ENCODE measurements at regions of chr1 and their contacts with region 1.

Region 1: DNA sequence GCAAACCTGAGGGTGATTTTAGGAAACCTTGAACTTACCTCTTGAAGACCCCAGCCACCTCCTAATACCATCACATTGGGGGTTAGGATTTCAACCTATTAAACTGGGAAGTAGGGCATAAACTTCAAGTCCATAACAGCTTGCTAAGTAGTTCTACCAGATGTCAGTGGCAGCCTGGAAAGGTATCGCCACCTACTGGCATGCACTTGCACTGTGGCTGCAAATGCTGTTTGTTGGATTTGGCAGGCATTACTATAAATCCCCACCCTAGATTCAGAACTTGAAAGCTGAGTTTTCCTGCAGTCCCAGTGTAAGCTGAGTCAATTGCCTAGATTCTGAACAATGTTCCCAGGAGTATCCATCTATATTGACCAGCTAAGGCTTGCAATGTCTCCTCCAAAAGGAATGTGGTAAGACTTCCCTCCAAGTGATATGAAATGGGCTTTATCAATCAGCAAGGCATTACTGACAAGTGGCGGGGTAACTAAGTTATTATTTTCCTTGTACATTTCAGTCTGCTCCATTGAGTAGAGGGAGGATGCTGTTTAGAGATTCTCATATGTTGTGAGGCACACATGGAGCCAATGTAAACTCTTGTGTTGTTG is 474.5 kb downstream of the PTPRC start:
- DNase-seq: peak; percentile 80
- H3K4me3 Mint-ChIP-seq: no peak overlapping the region
- H3K27ac Mint-ChIP-seq: no peak overlapping the region
- H3K4me1 Mint-ChIP-seq: no peaks in the 10 kb centered on the region
- H3K27me3 Mint-ChIP-seq: no peaks in the 10 kb centered on the region

Region 2: GRCh38 chr1:198756470-198756869 is 356.9 kb before region 1 on chr1:
- CTCF ChIA-PET with region 1: interaction called, 10 read pairs
- POLR2A ChIA-PET with region 1: no interaction called
- intact Hi-C with region 1: loop called (anchors 2 kb)
- DNase-seq: no peak
- H3K4me3 Mint-ChIP-seq: no peak overlapping the region
- H3K27ac Mint-ChIP-seq: no peak overlapping the region
- H3K4me1 Mint-ChIP-seq: peaks cover 14% of the 10 kb centered on the region
- H3K27me3 Mint-ChIP-seq: no peaks in the 10 kb centered on the region

Region 3: DNA sequence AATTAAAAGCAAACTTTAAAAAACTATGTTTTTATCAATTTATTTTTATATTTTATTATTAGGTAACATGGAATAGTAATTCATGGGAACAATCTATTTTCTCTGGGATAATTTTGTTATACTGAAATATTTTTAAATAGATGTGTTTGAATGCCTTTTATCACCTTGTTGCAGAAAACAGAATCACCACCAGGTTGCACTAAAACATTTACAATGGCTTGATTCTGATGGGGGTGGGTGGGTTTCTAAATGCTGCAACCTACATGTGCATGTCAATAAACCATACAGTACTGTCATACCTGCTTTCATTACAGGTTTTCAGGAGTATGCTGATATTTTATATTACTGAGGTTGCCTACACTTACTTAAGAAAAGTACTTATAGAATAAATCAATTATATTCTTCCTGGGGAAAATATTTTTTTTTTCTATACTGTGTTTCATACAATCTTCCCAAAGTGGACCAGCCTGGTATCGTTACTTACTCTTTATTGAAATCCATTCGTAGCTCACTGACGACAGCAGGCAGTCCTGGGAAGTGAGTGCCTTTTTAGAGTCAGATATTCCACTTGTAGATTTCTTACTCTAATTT is 341.7 kb before region 1 on chr1:
- CTCF ChIA-PET with region 1: interaction called, 15 read pairs
- POLR2A ChIA-PET with region 1: no interaction called
- intact Hi-C with region 1: loop called (anchors 1 kb)
- DNase-seq: no peak
- H3K4me3 Mint-ChIP-seq: no peak overlapping the region
- H3K27ac Mint-ChIP-seq: no peak overlapping the region
- H3K4me1 Mint-ChIP-seq: peaks cover 3% of the 10 kb centered on the region
- H3K27me3 Mint-ChIP-seq: no peaks in the 10 kb centered on the region

Region 4: GRCh38 chr1:198880818-198881597 is 232.4 kb before region 1 on chr1:
- CTCF ChIA-PET with region 1: interaction called, 3 read pairs
- POLR2A ChIA-PET with region 1: no interaction called
- intact Hi-C with region 1: loop called (anchors 5 kb)
- DNase-seq: no peak
- H3K4me3 Mint-ChIP-seq: no peak overlapping the region
- H3K27ac Mint-ChIP-seq: peak overlapping the region; percentile 26
- H3K4me1 Mint-ChIP-seq: peaks cover 13% of the 10 kb centered on the region
- H3K27me3 Mint-ChIP-seq: no peaks in the 10 kb centered on the region

Region 5: DNA sequence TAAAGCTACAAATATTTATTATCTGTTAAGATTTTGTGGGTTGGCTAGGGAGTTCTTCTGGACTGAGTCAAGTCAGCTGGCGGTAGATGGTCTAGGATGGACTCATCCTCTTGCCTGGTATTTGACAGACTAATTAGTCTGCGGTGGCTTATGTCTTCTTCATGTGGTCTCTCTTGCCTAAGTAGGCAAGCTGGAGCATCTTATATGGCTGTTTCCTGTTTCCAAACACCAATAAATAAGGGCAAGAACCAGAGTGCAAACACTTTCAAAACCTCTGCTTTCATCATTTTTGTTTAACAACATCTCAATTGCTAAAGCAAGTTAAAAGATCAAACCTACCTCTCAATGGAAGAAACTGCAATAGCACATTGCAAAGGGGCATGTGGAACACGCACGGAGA is 10.2 kb after region 1 on chr1:
- CTCF ChIA-PET with region 1: interaction called, 19 read pairs
- POLR2A ChIA-PET with region 1: no interaction called
- intact Hi-C with region 1: no loop called
- DNase-seq: no peak
- H3K4me3 Mint-ChIP-seq: no peak overlapping the region
- H3K27ac Mint-ChIP-seq: no peak overlapping the region
- H3K4me1 Mint-ChIP-seq: no peaks in the 10 kb centered on the region
- H3K27me3 Mint-ChIP-seq: no peaks in the 10 kb centered on the region

Region 6: GRCh38 chr1:199243423-199244061 is 130.2 kb after region 1 on chr1:
- CTCF ChIA-PET with region 1: interaction called, 27 read pairs
- POLR2A ChIA-PET with region 1: no interaction called
- intact Hi-C with region 1: loop called (anchors 2 kb)
- DNase-seq: peak; percentile 87
- H3K4me3 Mint-ChIP-seq: no peak overlapping the region
- H3K27ac Mint-ChIP-seq: no peak overlapping the region
- H3K4me1 Mint-ChIP-seq: no peaks in the 10 kb centered on the region
- H3K27me3 Mint-ChIP-seq: peaks cover 4% of the 10 kb centered on the region